Lower leg skin (tissue), 4 donors: ENCODE measurements at regions of chr10 and their contacts with region 1.

Region 1: GRCh38 chr10:14491806-14492205 is 161.1 kb upstream of the FRMD4A start:
- DNase-seq: no peak
- H3K4me3 ChIP-seq: no peak overlapping the region
- CTCF ChIP-seq: no peak
- POLR2A ChIP-seq: no peak

Region 2: GRCh38 chr10:14244147-14244546 is 247.7 kb before region 1 on chr10:
- intact Hi-C with region 1: no loop called
- DNase-seq: no peak
- H3K4me3 ChIP-seq: no peak overlapping the region
- CTCF ChIP-seq: no peak
- POLR2A ChIP-seq: no peak

Region 3: GRCh38 chr10:14371581-14371980 is 120.2 kb before region 1 on chr10:
- intact Hi-C with region 1: no loop called
- DNase-seq: no peak
- H3K4me3 ChIP-seq: no peak overlapping the region
- CTCF ChIP-seq: no peak
- POLR2A ChIP-seq: no peak

Region 4: GRCh38 chr10:14466257-14466656 is 25.5 kb before region 1 on chr10:
- intact Hi-C with region 1: no loop called
- DNase-seq: no peak
- H3K4me3 ChIP-seq: no peak overlapping the region
- CTCF ChIP-seq: no peak
- POLR2A ChIP-seq: no peak

Region 5: DNA sequence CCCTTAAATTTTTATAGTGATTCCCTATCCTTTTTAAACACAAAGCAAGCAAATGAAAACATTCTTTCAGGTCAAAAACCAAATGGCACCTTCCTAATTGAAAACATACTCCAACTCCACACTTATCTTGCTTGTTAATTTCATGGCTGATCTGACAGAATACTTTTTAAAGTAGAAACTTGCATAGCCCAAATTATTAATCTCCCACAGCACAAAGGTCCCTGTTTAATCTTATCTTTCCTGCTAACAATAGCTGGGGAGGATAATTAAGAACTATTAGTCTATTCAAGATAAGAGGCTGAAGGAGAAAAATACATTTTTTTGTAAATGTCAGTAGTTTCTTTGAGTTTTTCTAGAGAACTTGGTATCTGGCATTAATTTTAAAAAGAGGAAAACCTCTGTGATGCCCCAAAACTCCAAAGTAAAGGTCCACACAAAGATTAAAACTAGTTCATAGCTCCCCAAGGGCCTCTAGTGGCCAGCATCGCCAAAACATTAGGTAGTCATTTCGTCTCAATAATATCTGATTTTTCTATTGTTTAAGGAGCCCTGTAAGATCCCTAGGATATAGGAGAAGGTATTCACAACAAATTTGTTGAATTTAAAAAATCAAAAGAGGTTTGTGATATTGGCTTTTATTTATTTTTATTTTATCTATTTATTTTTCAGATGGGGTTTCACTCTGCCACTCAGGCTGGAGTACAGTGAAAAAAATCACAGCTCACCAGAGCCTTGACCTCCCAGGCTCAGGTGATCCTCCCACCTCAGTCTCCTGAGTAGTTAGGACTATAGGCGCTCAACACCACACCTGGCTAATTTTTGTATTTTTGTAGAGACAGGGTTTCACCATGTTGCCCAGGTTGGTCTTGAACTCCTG is 331.3 kb after region 1 on chr10:
- intact Hi-C with region 1: loop called (anchors 10 kb)
- DNase-seq: no peak
- H3K4me3 ChIP-seq: no peak overlapping the region
- CTCF ChIP-seq: no peak
- POLR2A ChIP-seq: no peak

Region 6: GRCh38 chr10:15106352-15107013 is 614.7 kb after region 1 on chr10:
- intact Hi-C with region 1: loop called (anchors 10 kb)
- DNase-seq: peak; percentile 59 to 93
- H3K4me3 ChIP-seq: no peak overlapping the region
- CTCF ChIP-seq: peak in 1 of 3 donors; percentile 63
- POLR2A ChIP-seq: no peak

Region 7: DNA sequence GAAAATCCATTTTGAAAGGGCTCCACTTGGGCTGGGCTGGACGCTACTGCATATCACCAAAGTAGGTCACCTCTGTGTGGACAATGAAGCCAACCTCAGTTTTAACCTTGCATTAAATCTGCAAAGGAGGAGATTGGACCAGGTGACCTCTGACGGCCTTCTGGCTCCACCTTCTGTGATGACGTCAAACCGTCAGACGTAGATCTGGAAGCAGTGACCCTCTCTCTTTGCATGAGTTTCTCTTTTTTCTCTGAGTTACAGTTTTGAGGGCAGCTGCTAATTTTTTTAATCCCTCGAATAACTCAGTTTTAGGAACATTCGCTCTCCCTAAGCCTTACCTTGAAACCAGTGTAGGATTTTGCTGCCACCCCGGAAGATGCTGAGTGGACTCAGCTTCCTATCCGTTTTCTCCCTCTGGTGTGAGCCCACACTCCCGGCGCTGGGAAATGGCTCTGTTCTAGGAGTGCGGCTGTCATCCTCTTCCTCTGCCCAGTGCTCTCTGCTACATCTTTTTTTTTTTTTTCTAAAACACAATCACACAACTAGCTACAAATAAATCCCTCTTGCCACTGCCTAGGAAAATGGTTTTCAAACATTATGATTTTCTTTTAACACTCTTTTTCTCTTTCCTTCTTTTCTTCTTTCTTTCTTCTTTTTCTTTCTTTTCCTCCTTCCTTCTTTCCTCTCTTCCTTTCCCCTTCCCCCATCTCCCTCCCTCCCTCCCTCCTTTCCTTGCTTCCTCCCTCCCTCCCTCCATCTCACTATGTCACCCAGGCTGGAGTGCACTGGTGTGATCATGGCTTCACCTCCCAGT is 704.4 kb after region 1 on chr10:
- intact Hi-C with region 1: no loop called
- DNase-seq: no peak
- H3K4me3 ChIP-seq: no peak overlapping the region
- CTCF ChIP-seq: no peak
- POLR2A ChIP-seq: no peak